Gastrocnemius medialis (tissue), 4 donors: ENCODE measurements at regions of chr9 and their contacts with region 1.

Region 1: GRCh38 chr9:116572095-116572748 is 114.9 kb upstream of the TRIM32 start:
- DNase-seq: peak; percentile 76 to 88
- ATAC-seq: peak; percentile 85 to 98
- H3K4me3 ChIP-seq: peak overlapping the region in 1 of 4 donors; percentile 10
- H3K27ac ChIP-seq: no peak overlapping the region
- H3K4me1 ChIP-seq: peaks cover 7 to 10% of the 10 kb centered on the region in 2 donors
- H3K27me3 ChIP-seq: no peaks in the 10 kb centered on the region
- CTCF ChIP-seq: peak; percentile 84 to 91 (median 88)
- POLR2A ChIP-seq: no peak

Region 2: DNA sequence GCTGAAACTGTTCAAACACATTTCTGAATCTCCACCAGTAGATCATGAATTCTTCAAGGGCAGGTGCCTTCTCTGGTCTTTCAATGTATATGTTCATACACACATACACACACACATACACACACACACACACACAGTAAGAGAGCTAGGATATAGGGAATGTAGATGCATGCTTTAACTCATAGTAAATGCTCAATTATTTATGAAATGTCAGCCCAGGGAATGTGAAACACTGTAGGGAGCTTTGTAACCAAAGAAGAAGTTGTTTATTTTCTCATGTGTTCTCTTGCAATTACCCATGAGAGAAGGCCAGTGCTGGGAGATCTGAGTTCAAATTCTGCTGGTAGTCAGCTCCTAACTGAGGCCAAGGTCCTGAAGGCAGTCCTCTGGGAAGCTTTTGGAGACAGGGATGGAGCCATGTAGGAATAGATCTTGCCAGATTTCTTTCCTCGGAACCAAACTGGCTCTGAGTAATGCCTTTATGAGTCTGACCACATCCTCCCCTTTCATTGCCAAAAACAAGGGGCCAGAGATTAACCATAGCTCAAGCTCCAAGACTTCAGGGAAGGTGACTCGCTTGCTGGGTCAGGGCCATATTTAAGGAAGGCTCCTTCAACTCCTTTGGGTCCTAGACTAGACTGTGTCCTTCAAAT is 967.3 kb before region 1 on chr9:
- in situ Hi-C with region 1: loop called in 1 of 4 experiments (anchors 10 kb)
- intact Hi-C with region 1: no loop called
- DNase-seq: no peak
- ATAC-seq: no peak
- H3K4me3 ChIP-seq: no peak overlapping the region
- H3K27ac ChIP-seq: no peak overlapping the region
- H3K4me1 ChIP-seq: no peaks in the 10 kb centered on the region
- H3K27me3 ChIP-seq: no peaks in the 10 kb centered on the region
- CTCF ChIP-seq: no peak
- POLR2A ChIP-seq: no peak

Region 3: DNA sequence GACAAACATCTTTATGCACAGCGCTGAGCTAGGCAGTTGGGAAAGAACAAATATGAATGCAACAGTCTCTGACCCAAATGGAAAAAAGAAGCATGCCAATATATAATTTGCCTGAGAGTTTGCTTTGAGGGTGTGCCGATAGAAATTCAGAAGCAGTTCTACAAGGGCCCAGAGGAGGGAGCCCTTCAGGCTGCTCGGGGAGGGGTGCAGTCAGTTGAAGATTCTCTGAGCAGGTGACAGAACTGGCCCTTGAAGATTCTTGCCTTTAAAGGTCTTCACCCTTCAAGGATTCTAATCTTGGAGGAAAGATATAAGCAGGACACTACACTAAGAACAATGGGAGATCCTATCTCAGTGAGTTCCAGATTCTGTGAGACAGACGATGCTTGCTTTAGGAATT is 422.4 kb before region 1 on chr9:
- in situ Hi-C with region 1: loop called in 3 of 4 experiments (anchors 5 to 25 kb)
- intact Hi-C with region 1: no loop called
- DNase-seq: peak in 1 of 2 donors; percentile 25
- ATAC-seq: peak in 1 of 2 donors; percentile 68
- H3K4me3 ChIP-seq: no peak overlapping the region
- H3K27ac ChIP-seq: no peak overlapping the region
- H3K4me1 ChIP-seq: peaks cover 0 to 6% of the 10 kb centered on the region in 2 donors
- H3K27me3 ChIP-seq: peaks cover 0 to 13% (median 0%) of the 10 kb centered on the region in 3 donors
- CTCF ChIP-seq: peak; percentile 24 to 64 (median 54)
- POLR2A ChIP-seq: no peak

Region 4: DNA sequence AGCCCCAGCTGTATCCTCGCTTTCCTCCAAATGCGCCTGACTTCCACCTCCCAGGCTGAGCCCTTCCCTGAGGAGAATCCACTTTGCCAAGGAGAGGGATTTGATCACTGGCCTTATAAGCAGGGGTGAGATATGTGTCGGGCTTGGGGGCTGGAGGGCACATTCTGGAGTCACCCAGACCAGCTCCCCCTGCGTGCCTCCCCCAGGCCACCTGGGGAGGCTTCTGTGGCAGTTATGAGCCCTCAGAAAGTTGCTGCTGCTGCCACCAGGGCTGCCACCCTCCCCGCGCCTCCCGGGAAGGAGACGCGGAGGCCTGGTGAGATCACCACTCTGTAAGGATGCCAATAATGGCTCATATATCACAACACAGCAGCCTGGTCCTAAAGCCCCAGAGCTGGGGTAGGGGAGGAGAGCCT is 207.2 kb before region 1 on chr9:
- in situ Hi-C with region 1: loop called in 1 of 4 experiments (anchors 25 kb)
- intact Hi-C with region 1: loop called (anchors 10 kb)
- DNase-seq: peak; percentile 61 to 74
- ATAC-seq: peak; percentile 86 to 89
- H3K4me3 ChIP-seq: peak overlapping the region in 2 of 4 donors; percentile 18 to 21
- H3K27ac ChIP-seq: peak overlapping the region; percentile 24 to 69 (median 54)
- H3K4me1 ChIP-seq: peaks cover 39 to 40% of the 10 kb centered on the region in 2 donors
- H3K27me3 ChIP-seq: no peaks in the 10 kb centered on the region
- CTCF ChIP-seq: peak in 2 of 5 experiments; percentile 27 to 45
- POLR2A ChIP-seq: no peak

Region 5: DNA sequence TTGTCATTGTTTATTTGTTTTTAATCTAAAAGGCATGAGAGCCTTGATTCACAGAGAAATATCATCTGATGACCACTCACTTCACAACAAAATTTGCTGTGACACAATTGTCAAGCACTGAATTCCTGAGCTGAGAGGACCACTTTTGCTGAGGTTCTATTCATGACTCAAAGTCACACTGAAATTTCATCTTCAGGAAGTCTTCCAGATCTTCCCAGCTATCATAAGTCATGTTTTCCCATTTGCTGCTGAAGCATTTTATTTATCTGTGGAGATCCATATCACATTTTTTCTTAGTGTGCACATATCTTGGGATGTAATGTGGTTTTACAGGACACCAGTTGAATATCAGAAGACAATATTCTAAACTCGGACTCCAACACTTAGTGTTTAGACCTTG is 140.2 kb before region 1 on chr9:
- in situ Hi-C with region 1: no loop called
- intact Hi-C with region 1: no loop called
- DNase-seq: no peak
- ATAC-seq: no peak
- H3K4me3 ChIP-seq: no peak overlapping the region
- H3K27ac ChIP-seq: no peak overlapping the region
- H3K4me1 ChIP-seq: no peaks in the 10 kb centered on the region
- H3K27me3 ChIP-seq: no peaks in the 10 kb centered on the region
- CTCF ChIP-seq: no peak
- POLR2A ChIP-seq: no peak

Region 6: GRCh38 chr9:116494815-116495634 is 77.2 kb before region 1 on chr9:
- in situ Hi-C with region 1: loop called in 1 of 4 experiments (anchors 10 kb)
- intact Hi-C with region 1: loop called (anchors 2 kb)
- DNase-seq: no peak
- ATAC-seq: peak; percentile 39 to 78
- H3K4me3 ChIP-seq: no peak overlapping the region
- H3K27ac ChIP-seq: no peak overlapping the region
- H3K4me1 ChIP-seq: no peaks in the 10 kb centered on the region
- H3K27me3 ChIP-seq: no peaks in the 10 kb centered on the region
- CTCF ChIP-seq: peak; percentile 46 to 71 (median 58)
- POLR2A ChIP-seq: no peak